Ascending aorta (tissue), 2 donors: ENCODE measurements at regions of chr9 and their contacts with region 1.

Region 1: GRCh38 chr9:126781186-126782052 is 23.4 kb upstream of the ZBTB43 start:
- DNase-seq: peak in 1 of 2 donors; percentile 84
- H3K4me3 ChIP-seq: no peak overlapping the region
- H3K27ac ChIP-seq: no peak overlapping the region
- H3K4me1 ChIP-seq: no peaks in the 10 kb centered on the region
- H3K27me3 ChIP-seq: no peaks in the 10 kb centered on the region
- CTCF ChIP-seq: peak; percentile 74 to 89 (median 86)

Region 2: GRCh38 chr9:126500684-126501382 is 280.6 kb before region 1 on chr9:
- intact Hi-C with region 1: loop called (anchors 5 kb)
- DNase-seq: peak in 1 of 2 donors; percentile 84
- H3K4me3 ChIP-seq: no peak overlapping the region
- H3K27ac ChIP-seq: no peak overlapping the region
- H3K4me1 ChIP-seq: peaks cover 4 to 12% of the 10 kb centered on the region in 2 donors
- H3K27me3 ChIP-seq: no peaks in the 10 kb centered on the region
- CTCF ChIP-seq: peak; percentile 85 to 94 (median 91)

Region 3: GRCh38 chr9:126611592-126612325 is 169.7 kb before region 1 on chr9:
- intact Hi-C with region 1: loop called (anchors 5 kb)
- DNase-seq: peak in 1 of 2 donors; percentile 78
- H3K4me3 ChIP-seq: peak overlapping the region; percentile 50 to 60
- H3K27ac ChIP-seq: no peak overlapping the region
- H3K4me1 ChIP-seq: peaks cover 9 to 25% of the 10 kb centered on the region in 2 donors
- H3K27me3 ChIP-seq: peaks cover 29% of the 10 kb centered on the region
- CTCF ChIP-seq: peak in 2 of 3 experiments; percentile 70 to 72

Region 4: GRCh38 chr9:126704873-126705766 is 76.3 kb before region 1 on chr9:
- intact Hi-C with region 1: loop called (anchors 2 kb)
- DNase-seq: peak in 1 of 2 donors; percentile 84
- H3K4me3 ChIP-seq: peak overlapping the region in 1 of 2 donors; percentile 7
- H3K27ac ChIP-seq: no peak overlapping the region
- H3K4me1 ChIP-seq: no peaks in the 10 kb centered on the region
- H3K27me3 ChIP-seq: peaks cover 22% of the 10 kb centered on the region
- CTCF ChIP-seq: peak; percentile 72 to 89 (median 83)

Region 5: DNA sequence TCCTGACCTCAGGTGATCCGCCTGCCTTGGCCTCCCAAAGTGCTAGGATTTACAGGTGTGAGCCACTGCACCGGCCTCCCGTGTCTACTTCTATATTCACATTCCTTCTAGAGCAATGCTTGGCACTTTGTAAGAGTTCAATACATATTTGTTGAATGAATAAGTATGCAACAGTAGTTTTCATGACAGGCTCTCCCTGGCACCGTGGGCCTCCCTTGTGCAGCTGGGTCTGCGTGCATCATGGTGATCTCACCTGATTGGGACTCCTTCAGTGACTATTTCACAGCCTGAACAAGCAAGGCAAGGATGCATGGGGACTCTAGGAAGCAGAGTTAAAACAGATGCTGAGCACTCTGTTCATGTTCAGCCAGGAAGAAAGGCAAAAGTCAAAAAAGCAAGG is 72.2 kb after region 1 on chr9:
- intact Hi-C with region 1: no loop called
- DNase-seq: no peak
- H3K4me3 ChIP-seq: no peak overlapping the region
- H3K27ac ChIP-seq: no peak overlapping the region
- H3K4me1 ChIP-seq: no peaks in the 10 kb centered on the region
- H3K27me3 ChIP-seq: no peaks in the 10 kb centered on the region
- CTCF ChIP-seq: no peak